ENCODE measurements at regions of chr12 and their contacts with region 1.

Region 1: DNA sequence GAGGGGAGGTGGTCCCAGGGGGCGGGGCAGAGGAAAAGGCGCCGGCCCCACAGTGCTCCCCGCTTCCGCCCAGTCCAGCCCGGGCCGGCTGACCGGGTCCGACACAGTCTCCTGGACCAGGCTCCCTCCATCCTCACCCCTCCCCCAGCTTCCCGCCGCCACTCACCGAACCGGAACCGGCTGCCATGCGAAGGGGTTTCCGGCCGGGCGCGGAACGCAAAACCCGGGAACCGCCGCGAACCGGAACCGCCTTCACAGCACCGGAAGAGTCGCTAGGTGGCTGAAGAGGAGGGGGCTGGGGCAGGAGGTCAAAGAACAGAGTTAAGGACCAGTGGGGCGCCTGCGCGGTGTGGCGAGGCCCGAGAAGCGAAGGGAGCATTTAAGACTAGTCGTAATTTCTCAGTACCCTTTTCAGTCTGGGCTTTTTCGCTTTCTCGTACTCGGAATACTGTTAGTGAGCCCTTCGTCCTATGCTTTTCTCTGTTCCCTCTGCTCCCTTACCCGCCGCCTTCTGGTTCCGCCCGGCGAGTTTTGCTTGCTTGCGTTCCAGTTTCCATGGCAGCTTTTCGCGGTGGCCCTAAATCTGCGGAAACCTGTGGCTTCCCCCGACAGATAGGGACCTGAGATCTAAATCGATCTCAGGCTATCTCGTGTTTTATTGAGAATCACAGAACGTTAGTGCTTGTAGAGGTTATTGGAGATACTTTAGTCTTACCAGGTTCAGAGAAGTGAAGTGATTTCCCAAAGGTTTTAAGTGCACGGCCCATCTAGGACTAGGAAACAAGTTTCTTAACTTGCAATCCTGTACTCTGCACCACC is at the start of gene SENP1:
- DNase-seq: peak; percentile 92 to 94
- H3K4me3 ChIP-seq: peak within 1 kb of the TSS; percentile 83
- H3K4me3 Mint-ChIP-seq: peak within 1 kb of the TSS; percentile 99
- H3K27ac Mint-ChIP-seq: peak within 1 kb of the TSS; percentile 97
- H3K4me1 ChIP-seq: peaks cover 18% of the 10 kb centered on the region
- H3K4me1 Mint-ChIP-seq: peaks cover 30% of the 10 kb centered on the region
- H3K27me3 ChIP-seq: no peaks in the 10 kb centered on the region
- H3K27me3 Mint-ChIP-seq: no peaks in the 10 kb centered on the region
- CTCF ChIP-seq: peak in 1 of 2 experiments; percentile 31
- total RNA-seq, gene SENP1: 40.4 and 42.1 TPM in 2 replicates

Region 2: DNA sequence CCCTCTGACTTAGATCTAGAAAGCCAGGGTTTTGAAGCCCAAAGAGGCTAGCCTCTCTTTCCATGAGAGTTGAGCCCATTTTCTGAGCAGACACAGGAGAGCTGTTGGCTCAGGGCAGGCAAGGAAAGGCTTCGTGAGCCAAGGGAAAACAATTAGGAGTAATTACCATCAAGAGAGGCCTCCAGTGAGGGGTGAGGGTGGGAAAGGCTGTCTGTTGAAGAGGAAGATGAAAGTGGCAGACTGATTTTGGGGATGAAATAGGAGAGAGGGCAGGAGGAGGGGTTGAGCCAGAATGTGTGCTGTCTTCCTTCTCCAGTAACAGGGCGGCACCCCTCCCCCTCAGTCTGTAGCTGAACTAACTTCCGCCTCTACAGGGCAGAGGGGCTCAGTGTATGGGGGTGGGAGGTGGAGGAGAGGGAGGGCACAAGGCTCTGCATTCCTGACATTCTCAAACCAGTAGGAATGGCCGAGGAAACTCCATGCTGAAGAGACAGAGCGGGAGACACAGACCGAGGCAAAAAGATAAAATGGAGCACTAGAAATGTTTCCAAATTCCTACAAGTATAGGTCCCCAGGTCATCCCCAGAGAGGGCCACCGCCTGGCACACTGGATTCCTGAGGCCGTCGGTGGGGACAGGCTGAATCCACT is 68.7 kb before region 1 on chr12:
- CTCF ChIA-PET with region 1: no interaction called
- POLR2A ChIA-PET with region 1: no interaction called
- intact Hi-C with region 1: loop called (anchors 2 kb)
- DNase-seq: peak; percentile 79 to 86
- H3K4me3 ChIP-seq: no peak overlapping the region
- H3K4me3 Mint-ChIP-seq: peak overlapping the region; percentile 27
- H3K27ac Mint-ChIP-seq: peak overlapping the region; percentile 97
- H3K4me1 ChIP-seq: peaks cover 49% of the 10 kb centered on the region
- H3K4me1 Mint-ChIP-seq: peaks cover 65% of the 10 kb centered on the region
- H3K27me3 ChIP-seq: no peaks in the 10 kb centered on the region
- H3K27me3 Mint-ChIP-seq: no peaks in the 10 kb centered on the region
- CTCF ChIP-seq: no peak

Region 3: GRCh38 chr12:48119078-48119833 is 13.2 kb after region 1 on chr12 and contains the start of gene PFKM:
- CTCF ChIA-PET with region 1: interaction called, 11 read pairs
- POLR2A ChIA-PET with region 1: interaction called, 11 read pairs
- intact Hi-C with region 1: loop called (anchors 1 kb)
- DNase-seq: peak; percentile 92 to 95
- H3K4me3 ChIP-seq: peak within 1 kb of the TSS; percentile 80
- H3K4me3 Mint-ChIP-seq: peak within 1 kb of the TSS; percentile 92
- H3K27ac Mint-ChIP-seq: peak within 1 kb of the TSS; percentile 70
- H3K4me1 ChIP-seq: peaks cover 20% of the 10 kb centered on the region
- H3K4me1 Mint-ChIP-seq: peaks cover 18% of the 10 kb centered on the region
- H3K27me3 ChIP-seq: no peaks in the 10 kb centered on the region
- H3K27me3 Mint-ChIP-seq: no peaks in the 10 kb centered on the region
- CTCF ChIP-seq: no peak
- total RNA-seq, gene PFKM: 96.8 and 108 TPM in 2 replicates

Measured in Caco-2 (cell line).